ENCODE measurements at regions of chr1 and their contacts with region 1.

Region 1: DNA sequence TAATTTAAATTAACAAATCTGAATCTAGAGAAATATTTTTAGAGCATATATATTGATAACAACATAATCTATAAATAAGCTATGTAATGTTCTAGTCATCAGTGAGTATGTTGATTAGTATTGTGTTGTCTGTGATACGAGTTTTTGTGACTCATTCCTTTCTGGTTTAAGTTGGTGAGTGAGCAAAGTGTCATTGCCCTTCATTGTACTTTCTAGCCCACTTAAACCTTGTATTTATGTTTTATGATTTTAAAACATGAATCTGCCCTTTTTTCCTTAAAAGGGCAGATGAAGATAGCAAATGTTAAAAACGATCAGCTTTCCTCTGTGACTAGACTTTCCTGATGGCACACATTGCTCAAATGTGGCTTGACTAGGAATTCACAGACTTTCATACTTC is 38.5 kb downstream of the MACO1 start:
- DNase-seq: no peak
- ATAC-seq: no peak
- H3K4me3 ChIP-seq: no peak overlapping the region
- H3K27ac ChIP-seq: no peak overlapping the region
- H3K4me1 ChIP-seq: peaks cover 7 to 19% of the 10 kb centered on the region in 2 experiments; a peak in 4 of 5 replicates
- H3K27me3 ChIP-seq: no peaks in the 10 kb centered on the region
- CTCF ChIP-seq: no peak
- EP300 ChIP-seq: no peak
- POLR2A ChIP-seq: no peak
- RAD21 ChIP-seq: no peak

Region 2: DNA sequence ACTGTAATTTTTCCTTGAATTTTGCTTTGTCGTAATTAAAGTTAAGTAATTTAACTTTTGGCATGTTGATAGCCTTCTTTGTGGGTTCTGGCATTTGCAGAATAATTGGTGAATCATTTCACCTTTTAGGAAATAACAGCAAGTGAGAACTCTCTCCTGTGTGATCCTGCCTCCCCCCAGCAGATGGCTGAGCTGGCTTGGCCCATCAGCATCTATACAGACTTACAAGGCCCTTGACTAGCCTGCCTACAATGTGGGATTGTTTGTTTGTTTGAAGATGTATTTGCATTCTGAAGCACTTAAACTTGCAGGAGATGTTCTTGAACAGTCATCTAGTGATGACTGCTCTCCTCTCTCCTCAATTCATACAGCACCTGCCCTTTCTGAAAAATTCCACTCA is 17.4 kb after region 1 on chr1:
- CTCF ChIA-PET with region 1: no interaction called
- POLR2A ChIA-PET with region 1: interaction called, 10 read pairs
- in situ Hi-C with region 1: no loop called
- intact Hi-C with region 1: no loop called
- DNase-seq: no peak
- ATAC-seq: peak; percentile 67
- H3K4me3 ChIP-seq: no peak overlapping the region
- H3K27ac ChIP-seq: no peak overlapping the region
- H3K4me1 ChIP-seq: peaks cover 7 to 21% of the 10 kb centered on the region in 2 experiments; a peak in 3 of 5 replicates
- H3K27me3 ChIP-seq: no peaks in the 10 kb centered on the region
- CTCF ChIP-seq: peak; percentile 16 to 39 (median 22); a peak in 4 of 6 replicates
- EP300 ChIP-seq: no peak
- POLR2A ChIP-seq: no peak
- RAD21 ChIP-seq: peak in 1 of 2 experiments; percentile 16; a peak in 1 of 4 replicates

Region 3: GRCh38 chr1:25520446-25521061 is 51.4 kb after region 1 on chr1:
- CTCF ChIA-PET with region 1: no interaction called
- POLR2A ChIA-PET with region 1: no interaction called
- in situ Hi-C with region 1: no loop called
- intact Hi-C with region 1: no loop called
- DNase-seq: peak; percentile 67 to 81 (median 68)
- ATAC-seq: peak; percentile 47; the same call in 2 of the 3 replicates
- H3K4me3 ChIP-seq: no peak overlapping the region
- H3K27ac ChIP-seq: no peak overlapping the region
- H3K4me1 ChIP-seq: peaks cover 7 to 10% of the 10 kb centered on the region in 2 experiments; a peak in 4 of 5 replicates
- H3K27me3 ChIP-seq: peaks cover 2 to 13% of the 10 kb centered on the region in 2 experiments; a peak in 3 of 5 replicates
- CTCF ChIP-seq: peak; percentile 76 to 87 (median 85)
- EP300 ChIP-seq: no peak
- POLR2A ChIP-seq: no peak
- RAD21 ChIP-seq: peak; percentile 85 to 89

Measured in K562 (cell line).